ENCODE measurements at regions of chr5 and their contacts with region 1.

Region 1: GRCh38 chr5:33423018-33423630 is 17.6 kb upstream of the TARS1 start:
- DNase-seq: peak; percentile 25
- CTCF ChIP-seq: peak; percentile 28

Region 2: DNA sequence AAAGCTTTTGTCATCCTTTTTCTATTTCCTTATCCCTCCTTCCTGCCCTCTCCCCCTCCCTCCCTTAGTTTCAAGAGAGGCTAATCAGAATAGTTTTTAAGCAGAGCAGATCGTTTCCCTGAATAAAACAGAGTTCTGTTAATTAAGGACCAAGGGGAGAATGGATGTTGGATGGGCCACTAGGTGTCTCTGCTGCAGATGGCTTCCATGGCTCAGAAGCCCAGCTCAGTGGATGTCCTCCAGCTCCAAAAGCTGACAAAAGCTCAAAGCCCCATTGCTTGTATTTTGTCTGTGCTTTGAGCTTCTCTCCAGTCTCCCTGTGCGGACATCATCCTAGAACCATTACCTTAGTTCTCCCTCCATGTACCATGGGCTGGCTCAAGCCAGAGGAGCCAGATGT is 733.0 kb before region 1 on chr5:
- in situ Hi-C with region 1: loop called (anchors 25 kb)
- DNase-seq: no peak
- CTCF ChIP-seq: no peak

Measured in GM13976 (cell line).